ENCODE measurements at regions of chr3 and their contacts with region 1.

Region 1: DNA sequence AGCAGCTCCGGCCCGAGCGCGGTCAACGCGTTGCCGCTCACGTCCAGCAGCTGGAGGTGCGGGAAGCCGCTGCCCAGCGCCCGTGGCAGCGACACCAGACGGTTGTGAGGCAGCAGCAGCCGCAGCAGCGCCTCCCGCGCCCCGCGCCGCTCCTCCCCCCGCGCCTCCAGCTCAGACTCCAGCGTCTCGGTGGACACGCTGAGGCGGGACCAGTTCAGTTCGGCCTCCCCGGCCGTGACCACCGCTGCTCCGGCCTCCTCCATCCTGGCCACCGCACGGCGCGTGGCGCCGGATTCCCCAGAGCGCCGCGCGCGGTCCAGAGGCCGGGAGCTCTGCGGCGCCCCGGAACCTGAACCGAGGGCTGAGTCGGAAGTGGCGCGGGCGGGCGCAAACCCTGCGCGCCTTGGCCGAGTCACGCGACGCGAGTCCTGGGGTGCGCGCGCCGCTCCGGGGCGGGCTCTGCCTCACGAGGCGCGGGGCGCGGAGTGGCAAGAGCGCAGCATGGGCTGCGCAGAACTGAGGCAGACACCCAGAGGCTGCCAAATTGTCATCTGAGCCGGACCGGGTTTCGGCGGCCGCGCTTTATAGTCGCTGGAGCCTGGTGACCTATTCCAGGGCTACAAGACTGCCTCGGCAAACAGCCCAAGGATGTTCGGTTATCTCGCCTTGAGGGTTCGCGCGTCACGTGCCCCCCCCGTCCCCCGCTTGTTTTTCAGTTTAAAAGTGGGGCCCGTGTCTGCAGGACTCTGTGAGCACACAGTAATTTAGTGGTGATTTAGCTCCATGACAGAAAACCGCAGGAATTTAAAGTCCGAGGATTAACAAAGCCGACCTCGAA is at the start of gene LRRC58:
- DNase-seq: peak; percentile 91 to 94
- H3K4me3 ChIP-seq: peak within 1 kb of the TSS; percentile 51 to 76 (median 52)
- H3K27ac ChIP-seq: peak within 1 kb of the TSS; percentile 63 to 97 (median 90)
- H3K4me1 ChIP-seq: peaks cover 12 to 18% of the 10 kb centered on the region in 2 donors
- H3K27me3 ChIP-seq: no peaks in the 10 kb centered on the region
- CTCF ChIP-seq: peak in 4 of 6 experiments; percentile 10 to 28 (median 17)
- POLR2A ChIP-seq: peak; percentile 69 to 96
- total RNA-seq, gene LRRC58: 40.3 to 52.4 (median 44.6) TPM

Region 2: GRCh38 chr3:120113128-120114116 is 235.8 kb before region 1 on chr3:
- intact Hi-C with region 1: no loop called
- DNase-seq: peak; percentile 28 to 35
- H3K4me3 ChIP-seq: no peak overlapping the region
- H3K27ac ChIP-seq: no peak overlapping the region
- H3K4me1 ChIP-seq: no peaks in the 10 kb centered on the region
- H3K27me3 ChIP-seq: no peaks in the 10 kb centered on the region
- CTCF ChIP-seq: no peak
- POLR2A ChIP-seq: no peak

Region 3: GRCh38 chr3:120245386-120245785 is 103.8 kb before region 1 on chr3:
- intact Hi-C with region 1: no loop called
- DNase-seq: no peak
- H3K4me3 ChIP-seq: no peak overlapping the region
- H3K27ac ChIP-seq: no peak overlapping the region
- H3K4me1 ChIP-seq: no peaks in the 10 kb centered on the region
- H3K27me3 ChIP-seq: no peaks in the 10 kb centered on the region
- CTCF ChIP-seq: no peak
- POLR2A ChIP-seq: no peak

Region 4: GRCh38 chr3:120506828-120507774 is 157.9 kb after region 1 on chr3:
- intact Hi-C with region 1: loop called (anchors 5 kb)
- DNase-seq: peak; percentile 36 to 37
- H3K4me3 ChIP-seq: no peak overlapping the region
- H3K27ac ChIP-seq: peak overlapping the region in 2 of 3 donors; percentile 62 to 72
- H3K4me1 ChIP-seq: peaks cover 17 to 21% of the 10 kb centered on the region in 2 donors
- H3K27me3 ChIP-seq: no peaks in the 10 kb centered on the region
- CTCF ChIP-seq: peak; percentile 38 to 63 (median 52)
- POLR2A ChIP-seq: no peak